GM12878 (cell line): ENCODE measurements at regions of chrX and their contacts with region 1.

Region 1: GRCh38 chrX:154308108-154308946 is 12.7 kb downstream of the TKTL1 start:
- DNase-seq: no peak
- ATAC-seq: peak; percentile 91
- H3K4me3 ChIP-seq: no peak overlapping the region
- H3K27ac ChIP-seq: no peak overlapping the region
- H3K4me1 ChIP-seq: peaks cover under 1% of the 10 kb centered on the region; the same call in 1 of the 2 replicates
- H3K27me3 ChIP-seq: no peaks in the 10 kb centered on the region
- CTCF ChIP-seq: peak; percentile 60 to 80 (median 67)
- EP300 ChIP-seq: no peak
- POLR2A ChIP-seq: no peak
- RAD21 ChIP-seq: peak; percentile 40

Region 2: DNA sequence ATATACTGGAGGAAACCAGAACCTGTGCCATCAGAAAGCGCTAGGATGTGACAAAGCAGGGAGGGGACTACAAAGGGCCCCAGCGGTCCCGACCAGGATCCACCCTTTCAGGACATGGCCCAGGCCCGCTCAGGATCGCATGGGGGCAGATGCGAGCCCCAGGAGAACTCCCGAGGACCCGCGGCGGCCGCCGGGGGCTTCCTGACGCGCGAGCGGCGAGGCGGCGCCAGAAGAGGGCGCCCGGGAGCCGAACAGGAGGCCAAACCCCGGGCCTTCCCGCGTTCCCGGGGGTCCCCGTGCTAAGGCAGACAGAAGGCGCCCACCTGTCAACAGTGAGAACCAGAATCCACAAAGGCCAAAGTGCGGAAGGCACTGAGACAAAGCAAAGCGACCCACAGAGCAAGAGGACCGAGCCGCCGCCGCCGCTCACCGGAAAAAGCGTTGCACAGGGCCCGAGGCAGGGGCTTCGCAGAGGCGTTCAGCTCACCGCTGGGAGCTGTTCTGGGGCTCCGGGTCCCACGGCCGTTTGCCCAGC is 171.6 kb before region 1 on chrX:
- CTCF ChIA-PET with region 1: interaction called, 17 read pairs
- POLR2A ChIA-PET with region 1: no interaction called
- RAD21 ChIA-PET with region 1: interaction called, 4 read pairs
- SMC1A ChIA-PET with region 1: interaction called, 4 read pairs
- in situ Hi-C with region 1: loop called (anchors 25 kb)
- intact Hi-C with region 1: no loop called
- DNase-seq: no peak
- ATAC-seq: peak; percentile 85
- H3K4me3 ChIP-seq: no peak overlapping the region
- H3K27ac ChIP-seq: no peak overlapping the region
- H3K4me1 ChIP-seq: no peaks in the 10 kb centered on the region
- H3K27me3 ChIP-seq: no peaks in the 10 kb centered on the region; a peak in 1 of 4 replicates
- CTCF ChIP-seq: peak; percentile 63 to 70 (median 67)
- EP300 ChIP-seq: no peak
- POLR2A ChIP-seq: no peak
- RAD21 ChIP-seq: peak; percentile 53

Region 3: DNA sequence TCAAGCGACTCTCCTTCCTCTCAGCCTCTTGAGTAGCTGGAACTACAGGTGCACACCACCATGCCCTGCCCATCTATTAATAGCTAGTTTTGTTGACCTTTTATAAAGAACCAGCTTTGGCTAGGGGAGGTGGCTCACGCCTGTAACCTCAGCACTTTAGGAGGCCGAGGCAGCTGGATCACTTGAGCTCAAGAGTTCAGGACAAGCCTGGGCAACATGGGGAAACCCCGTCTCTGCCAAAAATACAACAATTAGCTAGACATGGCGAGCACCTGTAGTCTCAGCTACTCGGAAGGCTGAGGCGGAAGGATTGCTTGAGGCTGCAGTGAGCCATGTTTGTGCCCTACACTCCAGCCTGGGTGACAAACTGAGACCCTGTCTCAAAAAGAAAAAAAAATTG is 10.0 kb before region 1 on chrX:
- CTCF ChIA-PET with region 1: interaction called, 10 read pairs
- POLR2A ChIA-PET with region 1: no interaction called
- RAD21 ChIA-PET with region 1: interaction called, 3 read pairs
- SMC1A ChIA-PET with region 1: interaction called, 3 read pairs
- in situ Hi-C with region 1: no loop called
- intact Hi-C with region 1: no loop called
- DNase-seq: no peak
- ATAC-seq: peak; percentile 69
- H3K4me3 ChIP-seq: no peak overlapping the region
- H3K27ac ChIP-seq: no peak overlapping the region
- H3K4me1 ChIP-seq: no peaks in the 10 kb centered on the region; the same call in 1 of the 2 replicates
- H3K27me3 ChIP-seq: no peaks in the 10 kb centered on the region
- CTCF ChIP-seq: no peak
- EP300 ChIP-seq: no peak
- POLR2A ChIP-seq: no peak
- RAD21 ChIP-seq: no peak